CD8-positive, alpha-beta memory T cell (primary cell): ENCODE measurements at regions of chr6 and their contacts with region 1.

Region 1: DNA sequence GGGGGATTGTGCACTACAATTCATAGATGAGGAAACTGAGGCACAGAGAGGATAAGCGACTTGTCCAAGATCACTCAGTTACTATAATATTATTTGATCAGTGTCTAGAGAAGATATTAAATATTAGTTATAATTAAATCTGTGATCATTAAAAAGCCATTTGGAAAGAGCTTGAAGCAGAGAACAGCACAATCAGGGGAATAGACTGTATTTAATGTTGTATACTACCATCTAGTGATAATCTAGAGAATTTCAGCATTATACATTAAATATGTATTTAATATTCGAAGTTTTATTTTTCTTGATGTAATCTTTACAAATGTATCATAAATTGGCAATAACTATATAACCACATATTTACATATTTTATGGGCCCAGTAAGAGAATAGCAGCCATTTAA is 20.1 kb upstream of the MTCL3 start:
- DNase-seq: peak in 1 of 5 donors; percentile 3
- H3K4me3 ChIP-seq: no peak overlapping the region
- H3K4me3 Mint-ChIP-seq: no peak overlapping the region
- H3K27ac ChIP-seq: no peak overlapping the region
- H3K27ac Mint-ChIP-seq: no peak overlapping the region
- H3K4me1 ChIP-seq: no peaks in the 10 kb centered on the region
- H3K4me1 Mint-ChIP-seq: no peaks in the 10 kb centered on the region
- H3K27me3 ChIP-seq: no peaks in the 10 kb centered on the region
- H3K27me3 Mint-ChIP-seq: peaks cover 10 to 17% of the 10 kb centered on the region in 2 donors

Region 2: DNA sequence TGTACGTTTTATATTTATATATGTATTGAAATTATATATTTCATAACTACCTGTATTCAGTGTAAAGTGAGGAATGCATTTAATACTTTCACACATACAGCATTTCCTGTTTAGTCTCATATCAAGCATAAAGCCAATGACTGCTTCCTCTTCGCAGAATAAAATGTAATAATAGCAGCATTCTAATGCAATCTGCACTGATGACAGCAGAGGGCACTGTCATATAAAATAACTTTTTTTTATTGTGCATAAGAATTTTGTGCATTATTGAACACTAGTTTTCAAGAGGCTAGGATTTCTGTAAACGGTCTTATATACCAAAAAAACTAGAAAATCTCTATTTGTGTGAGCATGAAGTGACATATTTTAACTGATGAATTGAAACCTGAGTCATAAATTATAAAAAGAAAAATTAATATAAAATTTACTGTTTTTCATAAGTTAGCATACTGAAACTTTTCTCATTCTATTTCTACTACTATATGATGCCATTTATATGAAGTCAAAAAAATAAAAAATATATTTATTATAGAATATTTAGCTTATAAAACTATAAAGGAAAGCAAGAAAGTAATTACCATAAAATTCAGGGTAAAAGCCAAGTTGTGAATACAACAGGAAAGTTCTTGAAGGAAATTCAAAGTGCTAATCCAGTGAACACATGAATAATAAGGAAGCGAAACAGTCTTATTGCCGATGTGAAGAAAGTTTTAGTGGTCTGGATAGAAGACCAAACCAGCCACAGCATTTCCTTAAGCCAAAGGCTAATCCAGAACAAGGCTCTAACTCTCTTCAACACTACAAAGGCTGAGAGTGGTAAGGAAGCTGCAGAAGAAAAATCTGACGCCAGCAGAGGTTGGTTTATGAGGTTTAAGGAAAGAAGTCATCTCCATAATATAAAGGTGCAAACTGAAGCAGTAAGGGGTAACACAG is 236.3 kb before region 1 on chr6:
- CTCF ChIA-PET with region 1: interaction called, 12 read pairs
- POLR2A ChIA-PET with region 1: no interaction called
- DNase-seq: peak in 4 of 5 donors; percentile 6 to 39 (median 14)
- H3K4me3 ChIP-seq: no peak overlapping the region
- H3K4me3 Mint-ChIP-seq: no peak overlapping the region
- H3K27ac ChIP-seq: no peak overlapping the region
- H3K27ac Mint-ChIP-seq: peak overlapping the region in 1 of 8 donors; percentile 22
- H3K4me1 ChIP-seq: no peaks in the 10 kb centered on the region
- H3K4me1 Mint-ChIP-seq: peaks cover 36 to 55% (median 54%) of the 10 kb centered on the region in 3 donors
- H3K27me3 ChIP-seq: no peaks in the 10 kb centered on the region
- H3K27me3 Mint-ChIP-seq: no peaks in the 10 kb centered on the region

Region 3: DNA sequence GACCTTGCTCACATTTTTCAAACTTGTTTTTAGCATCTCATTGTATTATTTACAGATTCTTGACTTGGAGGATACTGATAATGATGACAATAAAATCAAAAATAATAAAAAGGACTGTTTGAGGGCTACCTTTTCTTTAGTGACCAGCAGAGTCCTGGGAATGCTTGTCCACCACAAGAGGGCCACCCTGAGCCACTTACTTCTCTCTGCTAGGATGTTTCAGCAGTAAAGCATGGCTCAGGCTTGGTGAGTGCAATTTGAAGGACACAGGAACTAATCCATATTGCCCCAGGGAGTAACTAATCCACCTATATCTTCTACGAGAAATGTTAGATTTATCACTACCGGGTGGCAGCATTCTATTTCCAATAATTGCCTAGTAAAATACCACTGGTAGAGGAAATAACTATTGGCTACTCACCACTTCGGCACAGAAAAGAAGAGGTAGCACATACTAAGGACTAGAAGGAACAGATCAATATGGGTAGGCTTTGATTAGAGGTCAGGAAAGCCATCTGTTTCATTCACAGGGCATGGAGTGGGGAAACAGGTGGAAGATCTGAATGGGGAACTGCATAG is 74.3 kb before region 1 on chr6:
- CTCF ChIA-PET with region 1: interaction called, 14 read pairs
- POLR2A ChIA-PET with region 1: interaction called, 3 read pairs
- DNase-seq: peak; percentile 24 to 63 (median 25)
- H3K4me3 ChIP-seq: no peak overlapping the region
- H3K4me3 Mint-ChIP-seq: no peak overlapping the region
- H3K27ac ChIP-seq: no peak overlapping the region
- H3K27ac Mint-ChIP-seq: no peak overlapping the region
- H3K4me1 ChIP-seq: no peaks in the 10 kb centered on the region
- H3K4me1 Mint-ChIP-seq: no peaks in the 10 kb centered on the region
- H3K27me3 ChIP-seq: no peaks in the 10 kb centered on the region
- H3K27me3 Mint-ChIP-seq: no peaks in the 10 kb centered on the region